ENCODE measurements at regions of chr7 and their contacts with region 1.

Region 1: GRCh38 chr7:43729214-43729923 is at the start of gene COA1:
- DNase-seq: peak; percentile 73
- H3K4me3 Mint-ChIP-seq: peak within 1 kb of the TSS; percentile 86
- H3K27ac Mint-ChIP-seq: peak within 1 kb of the TSS; percentile 84
- H3K4me1 Mint-ChIP-seq: peaks cover 25% of the 10 kb centered on the region
- H3K27me3 Mint-ChIP-seq: no peaks in the 10 kb centered on the region
- total RNA-seq, gene COA1: 67.1 and 69.1 TPM in 2 replicates

Region 2: DNA sequence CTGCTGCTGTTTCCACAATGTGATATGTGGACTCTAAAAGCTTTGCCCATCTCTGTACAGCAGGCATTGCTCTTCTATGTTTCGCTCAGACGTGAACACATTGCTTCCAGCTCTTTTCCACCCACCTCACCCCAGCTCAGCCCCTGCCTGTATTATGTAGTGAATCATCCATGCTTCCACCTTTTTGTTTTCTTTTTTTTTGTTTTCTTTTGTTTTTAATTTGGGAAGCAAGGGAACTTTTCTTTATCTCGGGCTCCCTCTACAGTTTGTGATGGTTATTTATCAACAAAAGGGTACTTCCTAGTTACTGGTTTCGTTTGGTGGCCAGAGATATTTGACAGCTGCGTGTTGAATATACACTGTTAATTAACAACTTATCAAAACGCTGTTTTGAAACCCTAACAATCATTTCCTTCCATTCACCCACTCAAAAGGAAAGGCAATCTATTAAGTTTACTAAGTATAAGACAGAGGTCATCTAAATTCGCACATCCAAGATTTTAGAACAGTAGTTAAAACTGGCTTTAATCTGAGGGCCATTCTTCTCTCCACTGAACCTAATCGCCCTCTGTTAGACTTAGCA is 274.3 kb before region 1 on chr7:
- intact Hi-C with region 1: loop called (anchors 10 kb)
- DNase-seq: no peak
- H3K4me3 Mint-ChIP-seq: no peak overlapping the region
- H3K27ac Mint-ChIP-seq: no peak overlapping the region
- H3K4me1 Mint-ChIP-seq: peaks cover 4% of the 10 kb centered on the region
- H3K27me3 Mint-ChIP-seq: peaks cover 22% of the 10 kb centered on the region

Region 3: GRCh38 chr7:43501870-43502269 is 227.5 kb before region 1 on chr7:
- intact Hi-C with region 1: no loop called
- DNase-seq: no peak
- H3K4me3 Mint-ChIP-seq: no peak overlapping the region
- H3K27ac Mint-ChIP-seq: no peak overlapping the region
- H3K4me1 Mint-ChIP-seq: peaks cover 3% of the 10 kb centered on the region
- H3K27me3 Mint-ChIP-seq: peaks cover 18% of the 10 kb centered on the region

Region 4: DNA sequence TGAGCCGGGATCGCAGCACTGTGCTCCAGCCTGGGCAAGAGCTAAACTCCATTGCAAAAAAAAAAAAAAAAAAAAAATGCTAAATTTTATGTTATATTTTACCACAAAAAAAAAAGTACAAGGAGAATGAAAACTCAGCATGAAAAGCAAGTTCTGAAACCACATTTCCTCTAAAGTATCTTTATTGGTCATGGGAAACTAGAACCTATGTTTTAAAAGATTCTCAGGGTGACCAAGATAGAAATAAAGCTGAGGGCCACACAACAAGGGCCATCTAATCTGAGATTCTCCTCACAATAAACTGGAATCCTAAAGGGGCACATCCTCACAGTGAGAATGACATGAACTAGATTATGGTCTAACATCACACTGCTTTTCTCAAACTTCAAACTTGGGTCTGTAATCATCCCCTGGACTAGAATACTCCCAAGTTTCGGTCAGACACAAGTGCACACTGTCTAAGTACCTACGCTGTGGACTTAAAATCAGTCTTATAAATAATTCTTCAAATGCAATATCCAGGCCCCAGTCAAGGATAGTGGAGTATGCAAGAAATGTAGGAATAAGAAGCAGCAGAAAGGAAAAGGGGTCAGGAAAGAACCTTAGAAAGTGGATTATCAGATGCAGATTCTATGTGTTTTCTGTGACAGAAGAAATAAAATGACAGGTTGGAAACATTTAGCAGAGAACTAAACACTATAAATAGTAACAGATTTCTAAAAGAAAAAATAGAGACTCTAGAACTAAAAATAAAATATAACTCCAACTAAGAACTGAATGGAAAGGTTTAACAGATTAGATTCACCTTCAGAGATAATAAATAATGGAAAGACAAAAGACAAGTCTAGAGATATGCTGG is 49.9 kb before region 1 on chr7:
- intact Hi-C with region 1: loop called (anchors 5 kb)
- DNase-seq: no peak
- H3K4me3 Mint-ChIP-seq: no peak overlapping the region
- H3K27ac Mint-ChIP-seq: no peak overlapping the region
- H3K4me1 Mint-ChIP-seq: peaks cover 39% of the 10 kb centered on the region
- H3K27me3 Mint-ChIP-seq: no peaks in the 10 kb centered on the region

Region 5: GRCh38 chr7:43758029-43758821 is 28.9 kb after region 1 on chr7 and contains the start of gene BLVRA:
- intact Hi-C with region 1: loop called (anchors 2 kb)
- DNase-seq: peak; percentile 60
- H3K4me3 Mint-ChIP-seq: peak within 1 kb of the TSS; percentile 73
- H3K27ac Mint-ChIP-seq: no peak within 1 kb of the TSS
- H3K4me1 Mint-ChIP-seq: peaks cover 39% of the 10 kb centered on the region
- H3K27me3 Mint-ChIP-seq: peaks cover 25% of the 10 kb centered on the region
- total RNA-seq, gene BLVRA: 30.9 and 32.2 TPM in 2 replicates

Region 6: DNA sequence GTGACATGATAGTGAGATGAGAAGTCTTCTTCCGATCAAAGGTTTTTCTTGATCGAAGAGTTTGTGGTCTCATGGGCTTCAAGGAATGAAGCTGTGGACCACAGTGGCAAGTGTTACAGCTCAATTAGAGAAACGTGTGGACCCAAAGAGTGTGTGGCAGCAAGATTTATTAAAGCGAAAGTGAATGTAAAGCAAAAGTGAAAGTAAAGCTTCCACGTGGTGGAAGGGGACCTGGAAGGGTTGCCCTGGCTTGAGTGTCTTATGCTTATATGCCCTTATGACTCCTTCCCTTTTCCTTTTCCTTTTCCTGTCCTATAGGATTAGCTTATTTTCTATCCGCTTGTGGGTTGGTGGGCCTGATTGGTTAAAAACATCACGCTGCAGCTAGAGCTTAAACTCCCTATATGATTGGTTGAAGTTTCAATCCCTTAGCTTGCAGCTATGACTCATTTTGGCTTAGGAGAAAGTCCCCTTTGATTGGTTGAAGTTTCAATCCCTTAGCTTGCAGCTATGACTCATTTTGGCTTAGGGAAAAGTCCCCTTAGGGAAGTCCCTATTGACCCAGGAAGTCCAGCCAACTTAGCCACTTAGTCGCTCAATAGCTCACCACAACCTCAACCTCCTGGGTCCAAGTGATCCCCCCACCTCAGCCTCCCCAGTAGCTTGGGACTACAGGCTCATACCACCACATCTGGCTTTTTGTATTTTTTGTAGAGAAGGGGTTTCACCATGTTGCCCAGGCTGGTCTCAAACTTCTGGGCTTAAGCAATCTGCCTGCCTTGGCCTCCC is 105.3 kb after region 1 on chr7:
- intact Hi-C with region 1: loop called (anchors 2 kb)
- DNase-seq: peak; percentile 24
- H3K4me3 Mint-ChIP-seq: peak overlapping the region; percentile 75
- H3K27ac Mint-ChIP-seq: peak overlapping the region; percentile 83
- H3K4me1 Mint-ChIP-seq: peaks cover 15% of the 10 kb centered on the region
- H3K27me3 Mint-ChIP-seq: no peaks in the 10 kb centered on the region

Region 7: GRCh38 chr7:44398511-44398911 is 669.1 kb after region 1 on chr7:
- intact Hi-C with region 1: no loop called
- DNase-seq: no peak
- H3K4me3 Mint-ChIP-seq: no peak overlapping the region
- H3K27ac Mint-ChIP-seq: no peak overlapping the region
- H3K4me1 Mint-ChIP-seq: no peaks in the 10 kb centered on the region
- H3K27me3 Mint-ChIP-seq: no peaks in the 10 kb centered on the region

Measured in activated T-helper 2 cell treated with anti-CD3 and anti-CD28 coated beads, Interferon-gamma antibody, Interleukin-2, Interleukin-4, amounts not matched to agents 10 μg/mL and 5 μg/mL and 100 μg/mL, durations not matched to agents 14 hours and 24 hours and 36 hours (primary cell).